CD4-positive, alpha-beta memory T cell (primary cell): ENCODE measurements at regions of chr2 and their contacts with region 1.

Region 1: GRCh38 chr2:131801210-131801744 is 273.6 kb downstream of the CCDC74A start:
- DNase-seq: peak in 1 of 5 donors; percentile 0
- H3K4me3 ChIP-seq: no peak overlapping the region
- H3K4me3 Mint-ChIP-seq: peak overlapping the region in 2 of 8 donors; percentile 8 to 52
- H3K27ac ChIP-seq: no peak overlapping the region
- H3K27ac Mint-ChIP-seq: no peak overlapping the region
- H3K4me1 ChIP-seq: peaks cover 7% of the 10 kb centered on the region
- H3K4me1 Mint-ChIP-seq: peaks cover 0 to 9% (median 0%) of the 10 kb centered on the region in 4 donors
- H3K27me3 ChIP-seq: no peaks in the 10 kb centered on the region
- H3K27me3 Mint-ChIP-seq: peaks cover 2 to 4% of the 10 kb centered on the region in 2 donors

Region 2: DNA sequence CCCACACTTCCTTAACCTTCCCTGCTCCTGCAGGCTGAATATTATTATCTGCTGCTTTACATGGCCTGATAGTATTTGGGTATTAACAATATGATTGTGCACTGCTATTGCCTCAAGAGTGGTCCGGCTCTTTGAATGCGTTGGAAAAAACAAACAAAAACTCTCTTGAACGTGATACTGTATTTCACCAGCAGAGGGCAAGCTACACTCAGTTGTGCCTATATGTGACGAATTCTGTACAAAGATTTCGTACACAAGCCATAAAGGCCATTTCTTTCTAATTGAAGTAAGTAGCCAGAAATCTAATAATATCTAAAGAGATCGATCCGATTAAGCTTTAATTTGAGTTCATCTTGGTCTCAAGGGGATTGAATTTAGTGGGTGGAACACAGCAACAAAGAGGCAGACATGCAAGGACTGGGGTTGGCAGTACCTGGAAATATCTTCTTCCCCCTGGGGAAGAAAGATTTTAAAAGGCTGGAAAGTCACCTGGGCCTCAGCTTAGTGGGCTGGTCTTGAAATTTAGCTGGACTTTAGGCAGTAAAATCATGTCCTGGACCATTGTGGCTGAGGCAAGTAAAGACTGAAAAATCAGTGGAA is 388.0 kb before region 1 on chr2:
- CTCF ChIA-PET with region 1: interaction called, 17 read pairs
- POLR2A ChIA-PET with region 1: no interaction called
- intact Hi-C with region 1: no loop called
- DNase-seq: peak in 4 of 5 donors; percentile 35 to 44 (median 42)
- H3K4me3 ChIP-seq: no peak overlapping the region
- H3K4me3 Mint-ChIP-seq: no peak overlapping the region
- H3K27ac ChIP-seq: no peak overlapping the region
- H3K27ac Mint-ChIP-seq: peak overlapping the region in 1 of 7 donors; percentile 53
- H3K4me1 ChIP-seq: no peaks in the 10 kb centered on the region
- H3K4me1 Mint-ChIP-seq: peaks cover 0 to 1% (median 0%) of the 10 kb centered on the region in 4 donors
- H3K27me3 ChIP-seq: peaks cover 4% of the 10 kb centered on the region
- H3K27me3 Mint-ChIP-seq: peaks cover 9 to 28% of the 10 kb centered on the region in 2 donors

Region 3: GRCh38 chr2:131673392-131674173 is 127.7 kb before region 1 on chr2:
- CTCF ChIA-PET with region 1: interaction called, 31 read pairs
- POLR2A ChIA-PET with region 1: interaction called, 5 read pairs
- intact Hi-C with region 1: no loop called
- DNase-seq: peak; percentile 39 to 66 (median 52)
- H3K4me3 ChIP-seq: no peak overlapping the region
- H3K4me3 Mint-ChIP-seq: peak overlapping the region; percentile 44 to 78 (median 70)
- H3K27ac ChIP-seq: no peak overlapping the region
- H3K27ac Mint-ChIP-seq: no peak overlapping the region
- H3K4me1 ChIP-seq: peaks cover 17% of the 10 kb centered on the region
- H3K4me1 Mint-ChIP-seq: peaks cover 4 to 7% (median 5%) of the 10 kb centered on the region in 4 donors
- H3K27me3 ChIP-seq: peaks cover 12% of the 10 kb centered on the region
- H3K27me3 Mint-ChIP-seq: peaks cover 6 to 18% of the 10 kb centered on the region in 2 donors

Region 4: GRCh38 chr2:132037527-132038178 is 236.4 kb after region 1 on chr2:
- CTCF ChIA-PET with region 1: no interaction called
- POLR2A ChIA-PET with region 1: no interaction called
- intact Hi-C with region 1: no loop called
- DNase-seq: no peak
- H3K4me3 ChIP-seq: no peak overlapping the region
- H3K4me3 Mint-ChIP-seq: peak overlapping the region in 3 of 8 donors; percentile 39 to 70 (median 51)
- H3K27ac ChIP-seq: no peak overlapping the region
- H3K27ac Mint-ChIP-seq: no peak overlapping the region
- H3K4me1 ChIP-seq: no peaks in the 10 kb centered on the region
- H3K4me1 Mint-ChIP-seq: peaks cover 0 to 10% (median 3%) of the 10 kb centered on the region in 4 donors
- H3K27me3 ChIP-seq: no peaks in the 10 kb centered on the region
- H3K27me3 Mint-ChIP-seq: peaks cover 19 to 21% of the 10 kb centered on the region in 2 donors